HepG2 (cell line): ENCODE measurements at regions of chr2 and their contacts with region 1.

Region 1: DNA sequence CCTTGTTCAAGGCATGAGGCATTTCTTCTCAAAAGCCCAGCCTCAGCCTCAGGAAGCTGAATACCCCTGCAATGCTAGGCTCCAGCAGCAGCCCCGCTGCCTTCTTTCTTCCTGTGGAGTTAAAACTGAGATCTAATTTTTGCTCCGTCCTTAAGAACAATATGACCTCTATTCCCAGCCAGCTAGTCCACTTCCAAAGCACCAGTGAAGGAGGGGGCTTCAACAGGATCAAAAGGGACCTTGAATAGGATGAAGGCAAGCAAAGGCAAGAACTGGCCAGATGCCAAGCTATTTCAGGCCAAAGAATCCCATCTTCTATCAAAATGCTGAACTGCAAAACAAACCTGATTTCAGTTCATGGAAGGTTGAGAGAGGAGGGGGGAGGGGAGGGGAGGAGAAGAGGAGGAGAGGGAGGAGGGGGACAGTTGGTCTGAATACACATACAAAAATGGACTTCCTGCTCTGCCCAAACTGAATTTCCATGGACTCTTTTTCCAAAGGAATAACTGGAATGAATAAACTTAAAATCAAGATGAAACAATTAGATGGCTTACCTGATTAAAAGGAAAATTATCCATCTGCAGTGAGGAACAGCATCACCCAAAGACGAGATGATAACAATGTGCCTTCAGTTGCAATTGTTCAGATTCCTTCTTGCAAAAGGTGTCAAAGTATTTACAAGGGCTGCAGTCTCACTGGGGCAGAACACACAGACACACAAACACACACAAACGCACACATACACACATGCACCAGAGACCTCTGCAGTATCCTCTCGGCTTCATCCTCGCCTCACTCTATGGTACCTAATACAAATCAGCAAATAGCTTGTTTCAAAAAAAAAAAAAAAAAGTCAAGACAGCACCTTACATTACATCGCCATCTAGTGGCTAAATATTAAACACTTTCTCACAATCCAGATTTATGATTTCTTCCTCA is at the start of gene SCN1A:
- DNase-seq: peak; percentile 89
- ATAC-seq: peak; percentile 86
- H3K4me3 ChIP-seq: peak within 1 kb of the TSS; percentile 35 to 62 (median 50)
- H3K27ac ChIP-seq: peak within 1 kb of the TSS; percentile 72
- H3K4me1 ChIP-seq: peaks cover 93% of the 10 kb centered on the region
- H3K27me3 ChIP-seq: no peaks in the 10 kb centered on the region
- CTCF ChIP-seq: peak; percentile 81
- EP300 ChIP-seq: peak in 1 of 2 experiments; percentile 76; a peak in 2 of 4 replicates
- POLR2A ChIP-seq: no peak
- RAD21 ChIP-seq: peak; percentile 62; the same call in 1 of the 2 replicates
- total RNA-seq, gene SCN1A: 19.6 and 39.4 TPM in 2 replicates

Region 2: DNA sequence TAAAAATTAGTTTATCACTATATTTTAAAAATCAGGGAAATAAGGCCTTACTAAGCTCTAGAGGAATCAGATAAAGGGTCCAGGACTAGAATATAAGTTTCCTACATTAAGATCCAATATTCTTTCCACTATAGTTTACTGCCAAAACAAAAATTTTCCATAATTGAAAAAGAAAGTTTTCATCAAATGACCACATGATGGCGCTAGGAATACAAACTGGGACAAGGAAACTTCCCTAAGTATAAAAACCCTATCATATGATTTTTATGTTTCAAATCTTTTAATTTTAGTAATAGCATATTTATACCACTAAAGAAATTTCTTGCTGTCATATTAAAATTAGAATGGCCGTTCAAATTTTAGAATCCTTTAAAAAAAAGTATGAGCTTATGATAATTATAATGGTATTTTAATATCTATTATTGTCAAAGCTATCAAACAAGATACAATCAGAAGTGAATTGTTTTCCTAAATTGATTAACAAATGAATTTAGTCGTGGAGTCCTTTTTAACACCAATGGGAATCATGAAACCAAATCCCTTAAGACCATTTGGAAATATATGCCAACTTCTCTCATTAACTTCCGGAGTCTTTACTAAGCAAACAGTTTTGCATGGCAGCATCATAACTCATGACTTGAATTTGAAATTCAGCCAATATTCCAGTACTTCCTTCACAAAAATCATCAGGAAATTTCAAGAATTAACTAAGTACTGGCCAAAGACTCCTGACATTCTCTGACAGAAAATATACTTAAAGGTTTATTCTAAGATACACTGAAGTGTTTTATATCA is 69.9 kb before region 1 on chr2:
- CTCF ChIA-PET with region 1: interaction called, 19 read pairs
- POLR2A ChIA-PET with region 1: interaction called, 6 read pairs
- in situ Hi-C with region 1: loop called (anchors 5 kb)
- intact Hi-C with region 1: loop called (anchors 1 kb)
- DNase-seq: peak; percentile 47
- ATAC-seq: no peak
- H3K4me3 ChIP-seq: no peak overlapping the region
- H3K27ac ChIP-seq: no peak overlapping the region
- H3K4me1 ChIP-seq: peaks cover 6% of the 10 kb centered on the region; the same call in 1 of the 2 replicates
- H3K27me3 ChIP-seq: no peaks in the 10 kb centered on the region
- CTCF ChIP-seq: peak; percentile 62
- EP300 ChIP-seq: no peak
- POLR2A ChIP-seq: no peak
- RAD21 ChIP-seq: peak; percentile 37; the same call in 1 of the 2 replicates

Region 3: DNA sequence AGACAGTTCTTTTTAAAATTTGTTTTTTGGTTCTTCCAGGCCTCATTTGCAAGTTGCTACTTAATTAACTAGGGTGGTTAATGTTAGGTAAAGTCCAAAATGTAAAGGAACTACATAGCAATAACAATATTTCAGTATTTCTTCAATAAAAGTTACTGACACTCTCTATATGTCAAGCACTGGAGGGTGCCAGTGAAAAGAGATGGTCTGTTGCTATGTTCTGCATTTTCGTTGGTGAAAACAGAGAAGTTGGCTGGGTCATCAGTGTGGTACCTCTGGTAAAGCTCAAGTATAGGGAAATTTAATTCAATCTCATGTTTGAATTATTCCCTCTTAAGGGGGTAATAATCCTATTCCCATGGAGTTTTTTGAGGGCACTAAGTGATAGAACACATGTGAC is 16.6 kb after region 1 on chr2:
- CTCF ChIA-PET with region 1: no interaction called
- POLR2A ChIA-PET with region 1: no interaction called
- in situ Hi-C with region 1: no loop called
- intact Hi-C with region 1: no loop called
- DNase-seq: no peak
- ATAC-seq: no peak
- H3K4me3 ChIP-seq: no peak overlapping the region
- H3K27ac ChIP-seq: no peak overlapping the region
- H3K4me1 ChIP-seq: peaks cover 45% of the 10 kb centered on the region
- H3K27me3 ChIP-seq: no peaks in the 10 kb centered on the region
- CTCF ChIP-seq: no peak
- EP300 ChIP-seq: no peak
- POLR2A ChIP-seq: no peak
- RAD21 ChIP-seq: no peak